ENCODE measurements at regions of chr12 and their contacts with region 1.

Region 1: DNA sequence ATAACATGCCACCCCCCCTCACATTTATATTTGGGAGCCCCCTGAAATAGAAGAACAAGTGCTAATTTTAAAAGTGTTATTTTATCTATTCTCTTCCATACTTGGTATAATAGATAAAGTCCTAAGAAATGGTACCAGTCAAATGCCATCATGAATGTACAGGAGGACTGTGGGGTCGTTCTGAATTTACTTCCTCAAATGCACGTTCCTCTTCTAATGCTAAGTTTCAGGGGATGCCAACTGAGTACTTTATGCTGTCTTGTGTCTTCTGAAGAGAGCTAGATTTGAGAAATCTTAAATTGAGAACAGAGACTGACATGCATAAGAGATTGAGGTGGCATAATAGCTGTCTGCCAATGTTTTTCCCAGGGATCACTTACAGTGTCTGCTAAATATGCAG is 59.0 kb downstream of the CFAP54 start:
- DNase-seq: no peak
- ATAC-seq: no peak
- H3K4me3 Mint-ChIP-seq: peak overlapping the region; percentile 3
- H3K27ac Mint-ChIP-seq: peak overlapping the region; percentile 36
- H3K4me1 Mint-ChIP-seq: peaks cover 28% of the 10 kb centered on the region
- H3K27me3 Mint-ChIP-seq: no peaks in the 10 kb centered on the region
- CTCF ChIP-seq: no peak

Region 2: DNA sequence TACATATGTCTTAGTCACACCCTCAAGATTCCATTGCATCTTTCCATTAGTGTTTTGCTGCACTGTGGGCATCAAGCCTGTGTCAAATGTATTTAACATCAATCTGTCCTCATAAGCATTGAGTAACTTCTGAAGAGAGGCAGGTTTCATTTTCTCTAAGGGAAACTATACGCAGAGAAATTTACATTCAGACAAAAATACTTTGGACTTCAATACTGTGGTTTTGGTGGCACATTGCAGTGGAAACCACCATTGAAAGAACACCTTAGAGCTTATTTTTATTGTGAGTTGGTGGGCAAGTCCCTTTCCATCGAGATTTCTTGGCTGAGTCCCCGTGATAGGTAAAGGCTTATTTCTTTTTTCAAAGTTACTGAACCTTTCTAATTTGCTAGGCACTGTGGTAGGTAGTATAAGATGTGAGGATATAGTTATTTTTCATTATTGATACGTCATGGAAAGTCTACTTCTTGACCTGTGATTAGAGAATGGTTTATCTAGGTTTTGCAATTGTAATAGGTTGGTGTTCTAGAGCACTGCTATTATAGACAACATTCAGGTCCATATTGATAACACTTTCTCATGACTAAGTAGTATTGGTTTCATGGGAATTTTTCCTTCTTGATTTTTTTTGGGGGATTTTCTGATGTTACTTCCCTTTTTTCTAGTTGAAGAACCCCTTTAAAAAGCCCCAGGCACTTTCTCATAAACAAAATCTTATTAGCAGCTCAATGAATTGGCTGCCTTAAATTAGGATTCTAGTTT is 22.9 kb after region 1 on chr12:
- CTCF ChIA-PET with region 1: no interaction called
- POLR2A ChIA-PET with region 1: interaction called, 4 read pairs
- intact Hi-C with region 1: loop called (anchors 1 kb)
- DNase-seq: no peak
- ATAC-seq: peak; percentile 74
- H3K4me3 Mint-ChIP-seq: peak overlapping the region; percentile 74
- H3K27ac Mint-ChIP-seq: peak overlapping the region; percentile 89
- H3K4me1 Mint-ChIP-seq: peaks cover 30% of the 10 kb centered on the region
- H3K27me3 Mint-ChIP-seq: no peaks in the 10 kb centered on the region
- CTCF ChIP-seq: no peak

Region 3: GRCh38 chr12:97022536-97023230 is 474.3 kb after region 1 on chr12:
- CTCF ChIA-PET with region 1: no interaction called
- POLR2A ChIA-PET with region 1: no interaction called
- intact Hi-C with region 1: no loop called
- DNase-seq: no peak
- ATAC-seq: no peak
- H3K4me3 Mint-ChIP-seq: no peak overlapping the region
- H3K27ac Mint-ChIP-seq: no peak overlapping the region
- H3K4me1 Mint-ChIP-seq: no peaks in the 10 kb centered on the region
- H3K27me3 Mint-ChIP-seq: peaks cover 1% of the 10 kb centered on the region
- CTCF ChIP-seq: no peak